ENCODE measurements at regions of chr1 and their contacts with region 1.

Region 1: GRCh38 chr1:153352523-153352922 is 3.9 kb upstream of the PGLYRP4 start:
- DNase-seq: peak; percentile 68
- ATAC-seq: peak; percentile 29
- H3K4me3 Mint-ChIP-seq: no peak overlapping the region
- H3K27ac Mint-ChIP-seq: no peak overlapping the region
- H3K4me1 Mint-ChIP-seq: peaks cover 6% of the 10 kb centered on the region; the same call in 1 of the 2 replicates
- H3K27me3 Mint-ChIP-seq: peaks cover 18% of the 10 kb centered on the region; the same call in 1 of the 2 replicates
- CTCF ChIP-seq: peak; percentile 76

Region 2: GRCh38 chr1:153220606-153221303 is 131.8 kb before region 1 on chr1:
- CTCF ChIA-PET with region 1: no interaction called
- POLR2A ChIA-PET with region 1: no interaction called
- DNase-seq: no peak
- ATAC-seq: no peak
- H3K4me3 Mint-ChIP-seq: no peak overlapping the region
- H3K27ac Mint-ChIP-seq: no peak overlapping the region
- H3K4me1 Mint-ChIP-seq: no peaks in the 10 kb centered on the region
- H3K27me3 Mint-ChIP-seq: peaks cover 2% of the 10 kb centered on the region; the same call in 1 of the 2 replicates
- CTCF ChIP-seq: no peak

Region 3: DNA sequence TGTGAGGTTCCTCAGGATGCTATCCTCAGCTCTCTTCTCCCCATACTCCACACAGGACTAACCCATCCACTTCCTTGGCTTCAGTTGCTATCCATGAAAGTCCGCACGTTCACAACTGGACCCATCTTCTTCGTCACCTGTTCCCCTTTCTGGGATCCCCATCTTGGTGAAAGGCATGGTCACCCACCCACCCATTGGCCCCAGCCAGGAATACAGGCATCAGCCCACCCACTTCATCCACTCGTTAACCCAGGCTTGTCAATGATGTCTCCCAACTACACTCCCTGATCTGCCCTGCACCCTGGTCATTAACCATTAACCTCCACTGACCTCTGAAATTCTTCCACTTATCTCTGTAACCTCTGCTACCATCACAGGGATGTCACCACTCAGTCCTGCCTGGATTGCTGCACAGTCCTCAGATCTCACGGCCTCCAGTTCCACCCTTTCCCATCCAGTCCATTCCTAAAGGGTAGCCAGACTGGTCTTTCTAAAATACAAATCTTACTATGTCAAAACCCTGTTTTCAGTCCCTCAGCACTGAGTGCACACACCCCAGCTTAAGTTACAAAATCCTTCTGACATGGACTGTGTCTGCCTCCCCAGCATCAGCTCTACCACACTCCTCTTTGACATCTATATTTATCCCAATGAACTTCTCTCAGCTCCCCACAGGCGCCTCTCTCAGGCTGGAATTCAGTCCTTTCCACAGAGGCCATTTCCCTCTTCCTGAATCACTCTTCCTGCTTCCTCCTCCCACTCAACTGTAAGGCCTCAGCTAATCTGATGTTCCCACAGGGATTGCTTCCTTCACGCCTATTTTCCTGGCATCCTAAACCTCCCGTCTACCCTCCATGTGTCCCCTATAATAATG is 14.3 kb before region 1 on chr1:
- CTCF ChIA-PET with region 1: interaction called, 15 read pairs
- POLR2A ChIA-PET with region 1: no interaction called
- DNase-seq: no peak
- ATAC-seq: no peak
- H3K4me3 Mint-ChIP-seq: no peak overlapping the region
- H3K27ac Mint-ChIP-seq: no peak overlapping the region
- H3K4me1 Mint-ChIP-seq: no peaks in the 10 kb centered on the region
- H3K27me3 Mint-ChIP-seq: peaks cover 7% of the 10 kb centered on the region
- CTCF ChIP-seq: no peak

Region 4: DNA sequence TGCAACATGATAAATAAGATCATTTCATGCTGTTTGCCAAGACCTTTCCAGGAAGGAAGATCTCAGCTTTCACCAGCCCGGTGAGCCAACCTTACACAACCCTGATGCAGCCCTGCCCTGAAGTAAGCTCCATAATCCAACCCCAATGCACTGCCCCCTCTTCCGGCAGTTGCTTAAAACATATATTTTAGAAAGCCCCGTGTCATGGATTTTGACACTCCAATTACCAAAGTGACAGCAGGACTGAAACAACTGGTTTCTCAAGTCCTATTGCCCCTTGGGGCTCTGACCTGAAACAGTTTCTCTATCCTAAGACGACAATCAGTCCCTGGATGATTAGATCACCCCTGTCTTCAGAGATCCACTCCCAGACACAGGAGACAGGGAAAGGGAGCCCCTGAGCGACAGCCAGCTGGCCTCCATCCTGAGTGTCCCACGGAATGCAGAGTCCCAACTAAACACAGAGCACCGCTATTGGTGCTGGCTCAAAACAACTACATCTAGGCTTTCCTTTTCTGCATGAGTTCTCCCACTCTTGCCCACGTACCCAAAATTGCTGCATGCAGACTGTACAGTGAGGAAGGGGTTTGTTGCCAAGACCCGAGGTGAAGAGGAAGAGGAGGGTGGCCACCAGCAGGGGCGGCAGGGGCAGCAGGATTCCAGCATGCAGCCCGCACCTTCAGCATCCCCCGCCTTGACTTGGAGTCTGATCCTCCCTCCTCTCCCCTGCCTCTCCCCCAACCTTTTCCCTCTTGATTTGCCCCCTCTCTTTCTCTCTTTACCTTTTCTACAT is 13.0 kb after region 1 on chr1:
- CTCF ChIA-PET with region 1: interaction called, 14 read pairs
- POLR2A ChIA-PET with region 1: no interaction called
- DNase-seq: no peak
- ATAC-seq: no peak
- H3K4me3 Mint-ChIP-seq: no peak overlapping the region
- H3K27ac Mint-ChIP-seq: no peak overlapping the region
- H3K4me1 Mint-ChIP-seq: no peaks in the 10 kb centered on the region
- H3K27me3 Mint-ChIP-seq: peaks cover 3% of the 10 kb centered on the region
- CTCF ChIP-seq: no peak

Region 5: DNA sequence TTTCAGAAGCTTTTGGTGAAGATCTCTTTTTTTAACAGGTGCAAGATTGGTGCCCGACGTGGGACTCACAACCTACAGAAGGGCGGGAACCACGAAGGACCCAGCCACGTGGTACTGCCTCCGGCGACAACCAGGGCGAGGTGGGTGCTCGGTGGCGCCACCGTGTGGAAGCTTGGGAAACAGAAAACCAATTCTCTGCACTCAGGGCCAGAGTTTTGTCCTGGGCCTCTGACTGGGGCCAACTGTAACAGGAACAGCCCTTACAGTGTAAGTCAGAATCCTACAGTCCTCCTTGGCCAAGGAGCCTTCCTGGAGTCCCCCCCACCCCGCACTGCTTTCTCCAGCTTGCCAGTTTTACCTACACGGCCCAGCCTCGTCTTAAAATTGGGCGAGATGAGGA is 52.2 kb after region 1 on chr1:
- CTCF ChIA-PET with region 1: interaction called, 15 read pairs
- POLR2A ChIA-PET with region 1: no interaction called
- DNase-seq: peak; percentile 81
- ATAC-seq: peak; percentile 68
- H3K4me3 Mint-ChIP-seq: no peak overlapping the region
- H3K27ac Mint-ChIP-seq: no peak overlapping the region
- H3K4me1 Mint-ChIP-seq: peaks cover 18% of the 10 kb centered on the region
- H3K27me3 Mint-ChIP-seq: peaks cover 40% of the 10 kb centered on the region
- CTCF ChIP-seq: peak; percentile 79

Region 6: DNA sequence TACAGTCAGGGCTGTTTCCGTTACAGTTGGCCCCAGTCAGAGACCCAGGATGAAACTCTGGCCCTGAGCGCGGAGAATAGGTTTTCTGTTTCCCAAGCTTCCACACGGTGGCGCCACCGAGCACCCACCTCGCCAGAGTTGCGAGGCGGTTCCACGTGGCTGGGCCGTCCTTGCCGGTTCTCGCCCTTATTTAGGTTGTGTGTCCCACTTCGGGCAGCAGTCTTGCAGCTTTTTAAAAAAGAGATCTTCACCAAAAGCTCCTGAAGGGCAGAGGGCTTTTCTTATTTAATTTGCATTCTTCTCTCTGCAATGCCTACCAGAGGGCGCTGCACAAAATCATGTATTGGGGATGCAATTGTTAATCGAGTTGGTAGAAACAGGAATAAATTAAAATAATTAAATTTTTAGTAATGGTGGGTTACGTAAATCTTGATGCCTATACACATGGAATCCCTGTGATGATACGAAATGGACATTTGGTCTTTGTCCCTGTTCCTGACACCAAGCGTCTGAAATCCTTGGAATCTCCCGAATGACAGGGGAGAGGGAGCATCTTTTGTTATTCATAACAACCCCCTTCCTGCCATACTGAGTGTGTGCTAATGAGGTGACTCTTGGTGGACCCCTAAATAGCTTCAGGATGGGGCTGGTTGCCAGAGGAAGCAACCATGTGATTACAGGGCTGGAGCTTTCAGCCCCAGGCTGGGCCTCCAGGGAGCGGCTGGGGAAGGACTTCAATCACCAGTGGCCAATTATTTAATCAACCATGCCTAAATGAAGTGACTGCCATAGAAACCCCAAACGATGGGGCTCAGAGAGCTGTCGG is 113.5 kb after region 1 on chr1:
- CTCF ChIA-PET with region 1: interaction called, 15 read pairs
- POLR2A ChIA-PET with region 1: no interaction called
- DNase-seq: peak; percentile 82
- ATAC-seq: peak; percentile 82
- H3K4me3 Mint-ChIP-seq: peak overlapping the region; percentile 41
- H3K27ac Mint-ChIP-seq: peak overlapping the region; percentile 48; the same call in 1 of the 2 replicates
- H3K4me1 Mint-ChIP-seq: peaks cover 29% of the 10 kb centered on the region
- H3K27me3 Mint-ChIP-seq: peaks cover 11% of the 10 kb centered on the region
- CTCF ChIP-seq: peak; percentile 88

Region 7: GRCh38 chr1:153510984-153511410 is 158.5 kb after region 1 on chr1:
- CTCF ChIA-PET with region 1: interaction called, 10 read pairs
- POLR2A ChIA-PET with region 1: no interaction called
- DNase-seq: peak; percentile 93
- ATAC-seq: peak; percentile 96
- H3K4me3 Mint-ChIP-seq: no peak overlapping the region
- H3K27ac Mint-ChIP-seq: no peak overlapping the region
- H3K4me1 Mint-ChIP-seq: peaks cover 5% of the 10 kb centered on the region; the same call in 1 of the 2 replicates
- H3K27me3 Mint-ChIP-seq: peaks cover 38% of the 10 kb centered on the region
- CTCF ChIP-seq: peak; percentile 81

Measured in WTC11 (cell line).